PC-9 (cell line): ENCODE measurements at regions of chr13 and their contacts with region 1.

Region 1: GRCh38 chr13:79631051-79631659 is 150.2 kb downstream of the NDFIP2 start:
- DNase-seq: peak; percentile 59 to 90
- H3K4me3 ChIP-seq: no peak overlapping the region
- H3K27ac ChIP-seq: no peak overlapping the region
- H3K4me1 ChIP-seq: peaks cover 4% of the 10 kb centered on the region; the same call in 1 of the 2 replicates
- H3K27me3 ChIP-seq: no peaks in the 10 kb centered on the region
- CTCF ChIP-seq: peak; percentile 67

Region 2: GRCh38 chr13:79548902-79549301 is 82.3 kb before region 1 on chr13:
- CTCF ChIA-PET with region 1: no interaction called
- POLR2A ChIA-PET with region 1: no interaction called
- intact Hi-C with region 1: loop called (anchors 1 kb)
- DNase-seq: no peak
- H3K4me3 ChIP-seq: no peak overlapping the region
- H3K27ac ChIP-seq: peak overlapping the region; percentile 16; the same call in 1 of the 2 replicates
- H3K4me1 ChIP-seq: no peaks in the 10 kb centered on the region
- H3K27me3 ChIP-seq: no peaks in the 10 kb centered on the region
- CTCF ChIP-seq: peak; percentile 43; the same call in 1 of the 2 replicates

Region 3: DNA sequence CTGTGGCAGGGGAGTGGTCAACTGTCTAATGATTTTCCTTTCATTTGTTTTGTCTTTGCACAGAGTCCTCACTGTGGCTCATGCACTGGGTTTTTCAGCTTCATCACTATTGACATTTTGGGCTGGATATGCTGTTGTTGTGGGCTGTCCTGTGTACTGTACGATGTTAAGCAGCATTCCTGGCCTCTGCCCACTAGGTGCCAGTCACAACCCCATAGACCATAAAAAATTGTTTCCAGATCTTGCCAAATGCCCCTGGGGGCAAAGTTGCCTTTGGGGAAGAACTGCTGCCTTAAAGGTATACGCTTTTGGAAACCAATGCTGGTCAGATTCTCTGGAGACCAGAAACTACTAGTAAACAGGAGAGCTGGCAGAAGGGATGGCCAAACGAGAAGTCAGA is 399.3 kb after region 1 on chr13:
- CTCF ChIA-PET with region 1: no interaction called
- POLR2A ChIA-PET with region 1: no interaction called
- intact Hi-C with region 1: loop called (anchors 10 kb)
- DNase-seq: peak; percentile 77 to 80
- H3K4me3 ChIP-seq: no peak overlapping the region
- H3K27ac ChIP-seq: no peak overlapping the region
- H3K4me1 ChIP-seq: peaks cover 10% of the 10 kb centered on the region
- H3K27me3 ChIP-seq: no peaks in the 10 kb centered on the region
- CTCF ChIP-seq: peak; percentile 58

Region 4: GRCh38 chr13:80048802-80049201 is 417.6 kb after region 1 on chr13:
- CTCF ChIA-PET with region 1: interaction called, 10 read pairs
- POLR2A ChIA-PET with region 1: no interaction called
- intact Hi-C with region 1: no loop called
- DNase-seq: peak; percentile 39 to 47
- H3K4me3 ChIP-seq: no peak overlapping the region
- H3K27ac ChIP-seq: no peak overlapping the region
- H3K4me1 ChIP-seq: 0 out of 2 replicates have a peak, but pooled peaks cover 9% of the 10 kb centered on the region
- H3K27me3 ChIP-seq: no peaks in the 10 kb centered on the region
- CTCF ChIP-seq: no peak

Region 5: GRCh38 chr13:80363890-80364503 is 732.8 kb after region 1 on chr13:
- CTCF ChIA-PET with region 1: no interaction called
- POLR2A ChIA-PET with region 1: no interaction called
- intact Hi-C with region 1: loop called (anchors 5 kb)
- DNase-seq: no peak
- H3K4me3 ChIP-seq: peak overlapping the region; percentile 16; the same call in 1 of the 2 replicates
- H3K27ac ChIP-seq: no peak overlapping the region
- H3K4me1 ChIP-seq: no peaks in the 10 kb centered on the region
- H3K27me3 ChIP-seq: no peaks in the 10 kb centered on the region
- CTCF ChIP-seq: peak; percentile 79